Activated CD4-positive, alpha-beta T cell treated with anti-CD3 and anti-CD28 coated beads, Interleukin-2, amount 10 ng/mL, durations not matched to agents 7 days and 5 days (primary cell): ENCODE measurements at regions of chr17 and their contacts with region 1.

Region 1: DNA sequence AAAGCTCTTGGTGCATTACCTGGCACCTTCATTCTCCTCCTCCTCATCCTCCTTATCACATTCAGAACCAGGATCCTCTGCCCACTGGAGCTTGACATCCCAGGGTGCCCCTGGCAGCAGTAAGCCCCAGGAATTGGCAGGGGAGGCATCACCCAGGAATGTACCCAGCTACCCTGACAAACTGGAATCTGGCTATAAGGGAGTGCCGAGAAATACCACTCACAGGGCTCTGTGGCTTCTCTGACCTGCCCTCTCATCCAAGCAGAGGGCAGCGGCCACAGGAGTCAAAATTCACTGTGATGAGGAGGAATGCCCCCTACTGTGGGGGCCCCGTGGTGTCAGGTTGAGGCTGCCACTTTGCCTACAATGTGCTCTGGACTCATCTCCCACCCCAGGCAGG is 19.6 kb downstream of the MPP3 start:
- DNase-seq: no peak
- H3K4me3 Mint-ChIP-seq: no peak overlapping the region
- H3K27ac Mint-ChIP-seq: no peak overlapping the region
- H3K4me1 Mint-ChIP-seq: no peaks in the 10 kb centered on the region
- H3K27me3 Mint-ChIP-seq: peaks cover 2% of the 10 kb centered on the region

Region 2: GRCh38 chr17:43846221-43846712 is 32.9 kb after region 1 on chr17:
- CTCF ChIA-PET with region 1: interaction called, 6 read pairs
- POLR2A ChIA-PET with region 1: interaction called, 11 read pairs
- DNase-seq: peak; percentile 75
- H3K4me3 Mint-ChIP-seq: no peak overlapping the region
- H3K27ac Mint-ChIP-seq: no peak overlapping the region
- H3K4me1 Mint-ChIP-seq: no peaks in the 10 kb centered on the region
- H3K27me3 Mint-ChIP-seq: peaks cover 15% of the 10 kb centered on the region

Region 3: DNA sequence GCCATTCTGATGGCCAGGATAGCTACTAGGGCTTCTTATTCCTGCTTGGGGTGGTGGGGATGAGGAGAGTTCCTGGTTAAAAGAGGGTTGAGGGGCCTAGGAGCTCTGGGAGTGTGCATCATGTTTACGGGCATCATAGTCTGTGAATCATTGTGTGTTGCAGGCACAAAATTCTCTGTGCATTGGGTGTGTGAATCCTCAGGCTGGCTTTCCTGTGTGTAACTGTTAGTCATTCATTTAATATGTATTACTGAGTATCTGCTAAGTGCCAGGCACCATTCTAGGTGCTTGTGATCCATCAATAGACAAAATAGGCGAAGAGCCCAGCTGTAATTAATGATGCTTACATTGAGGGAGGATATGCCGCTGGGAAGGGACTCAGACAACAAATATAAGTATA is 123.0 kb after region 1 on chr17:
- CTCF ChIA-PET with region 1: no interaction called
- POLR2A ChIA-PET with region 1: no interaction called
- DNase-seq: no peak
- H3K4me3 Mint-ChIP-seq: no peak overlapping the region
- H3K27ac Mint-ChIP-seq: no peak overlapping the region
- H3K4me1 Mint-ChIP-seq: peaks cover 6% of the 10 kb centered on the region
- H3K27me3 Mint-ChIP-seq: peaks cover 18% of the 10 kb centered on the region